ENCODE measurements at regions of chr4 and their contacts with region 1.

Region 1: GRCh38 chr4:102935716-102936115 is 66.9 kb downstream of the CISD2 start:
- DNase-seq: no peak
- H3K4me3 ChIP-seq: no peak overlapping the region
- H3K27ac ChIP-seq: no peak overlapping the region
- H3K4me1 ChIP-seq: no peaks in the 10 kb centered on the region
- H3K27me3 ChIP-seq: no peaks in the 10 kb centered on the region
- CTCF ChIP-seq: no peak
- POLR2A ChIP-seq: no peak

Region 2: DNA sequence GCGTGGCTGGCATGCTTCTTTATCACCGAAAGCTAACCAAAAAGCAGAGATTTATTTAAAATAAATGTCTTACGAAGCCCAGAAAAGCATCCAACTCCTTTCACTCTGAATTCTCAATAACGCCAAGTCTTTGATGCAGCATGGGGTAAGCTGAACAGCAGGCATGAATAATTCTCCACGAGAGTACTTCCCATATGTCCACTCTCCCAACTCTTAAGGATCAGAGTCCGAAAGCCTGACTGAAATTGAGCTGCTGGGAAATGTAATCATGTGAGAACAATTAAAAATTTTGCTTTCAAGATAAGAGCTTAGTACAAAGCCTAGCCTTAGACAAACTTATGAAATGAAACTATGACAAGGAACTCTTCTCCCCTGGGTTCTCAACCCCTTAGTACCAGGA is 582.9 kb before region 1 on chr4:
- intact Hi-C with region 1: loop called (anchors 10 kb)
- DNase-seq: no peak
- H3K4me3 ChIP-seq: no peak overlapping the region
- H3K27ac ChIP-seq: no peak overlapping the region
- H3K4me1 ChIP-seq: no peaks in the 10 kb centered on the region
- H3K27me3 ChIP-seq: no peaks in the 10 kb centered on the region
- CTCF ChIP-seq: no peak
- POLR2A ChIP-seq: no peak

Region 3: DNA sequence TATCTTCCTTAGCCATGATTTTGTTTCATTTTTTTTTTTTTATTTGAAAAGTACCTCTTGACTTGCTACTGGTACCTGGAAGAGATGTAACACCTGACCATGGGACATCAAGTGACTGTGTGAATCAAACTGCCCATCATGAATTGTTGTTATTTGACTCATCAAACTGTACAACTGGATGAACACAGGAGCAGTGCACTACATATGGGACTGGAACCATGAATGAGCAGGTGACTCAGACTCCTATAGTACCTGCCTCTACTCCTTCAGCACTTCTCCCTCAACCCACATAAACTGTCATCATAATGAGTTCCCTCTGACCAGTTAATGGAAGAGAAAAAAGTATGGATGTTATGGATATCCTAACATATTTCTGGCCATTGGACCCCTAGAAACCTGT is 92.4 kb before region 1 on chr4:
- intact Hi-C with region 1: no loop called
- DNase-seq: no peak
- H3K4me3 ChIP-seq: no peak overlapping the region
- H3K27ac ChIP-seq: no peak overlapping the region
- H3K4me1 ChIP-seq: no peaks in the 10 kb centered on the region
- H3K27me3 ChIP-seq: no peaks in the 10 kb centered on the region
- CTCF ChIP-seq: no peak
- POLR2A ChIP-seq: no peak

Measured in testis (tissue), 5 donors.